Activated CD4-positive, alpha-beta memory T cell treated with anti-CD3 and anti-CD28 coated beads for 36 hours (primary cell): ENCODE measurements at regions of chr1 and their contacts with region 1.

Region 1: DNA sequence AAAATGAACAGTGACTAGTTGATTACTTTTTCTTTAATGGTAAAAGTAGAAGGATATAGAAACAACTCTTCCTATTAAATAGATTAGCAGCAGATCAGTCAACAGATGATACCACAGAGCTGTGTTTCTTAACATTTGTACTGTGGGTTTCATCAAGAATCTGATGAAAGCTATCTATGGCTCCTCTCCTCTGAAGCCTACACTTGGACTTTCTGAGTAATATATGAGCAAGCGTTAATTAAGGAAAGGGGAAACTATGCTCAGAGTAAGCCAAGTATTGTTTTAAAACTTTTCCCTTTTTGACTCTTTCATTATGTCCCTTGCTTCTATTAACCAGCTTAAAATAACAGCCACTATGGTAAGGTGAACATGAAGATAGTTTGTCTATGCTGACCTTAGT is 10.8 kb downstream of the ARID4B start:
- DNase-seq: no peak
- H3K4me3 Mint-ChIP-seq: no peak overlapping the region
- H3K27ac Mint-ChIP-seq: peak overlapping the region; percentile 68
- H3K4me1 Mint-ChIP-seq: peaks cover 74% of the 10 kb centered on the region
- H3K27me3 Mint-ChIP-seq: no peaks in the 10 kb centered on the region

Region 2: DNA sequence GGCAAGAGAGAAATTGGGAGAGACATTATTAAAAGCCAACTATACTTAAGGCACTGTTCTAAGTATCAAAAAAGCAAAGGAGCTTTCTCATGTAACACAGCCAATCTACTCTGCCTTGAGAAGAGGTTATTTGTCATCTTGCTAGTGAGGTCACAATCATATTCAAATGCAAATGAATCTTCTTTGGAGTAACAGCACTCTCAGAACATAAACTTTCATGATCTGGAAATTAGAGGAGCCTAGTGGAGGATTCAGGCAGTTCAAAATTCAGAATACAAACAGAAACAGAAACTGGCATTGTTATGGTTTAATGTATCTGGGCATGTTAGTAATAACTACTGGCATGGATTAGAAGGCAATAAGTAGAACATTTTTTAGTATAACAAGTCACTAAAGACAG is 46.5 kb before region 1 on chr1:
- CTCF ChIA-PET with region 1: interaction called, 3 read pairs
- POLR2A ChIA-PET with region 1: no interaction called
- intact Hi-C with region 1: loop called (anchors 5 kb)
- DNase-seq: no peak
- H3K4me3 Mint-ChIP-seq: no peak overlapping the region
- H3K27ac Mint-ChIP-seq: peak overlapping the region; percentile 70
- H3K4me1 Mint-ChIP-seq: peaks cover 68% of the 10 kb centered on the region
- H3K27me3 Mint-ChIP-seq: no peaks in the 10 kb centered on the region

Region 3: GRCh38 chr1:235297579-235297978 is 19.6 kb before region 1 on chr1:
- CTCF ChIA-PET with region 1: interaction called, 3 read pairs
- POLR2A ChIA-PET with region 1: interaction called, 4 read pairs
- intact Hi-C with region 1: loop called (anchors 2 kb)
- DNase-seq: no peak
- H3K4me3 Mint-ChIP-seq: peak overlapping the region; percentile 66
- H3K27ac Mint-ChIP-seq: peak overlapping the region; percentile 79
- H3K4me1 Mint-ChIP-seq: peaks cover 53% of the 10 kb centered on the region
- H3K27me3 Mint-ChIP-seq: no peaks in the 10 kb centered on the region

Region 4: GRCh38 chr1:235304549-235305451 is 12.4 kb before region 1 on chr1:
- CTCF ChIA-PET with region 1: no interaction called
- POLR2A ChIA-PET with region 1: interaction called, 5 read pairs
- intact Hi-C with region 1: loop called (anchors 1 kb)
- DNase-seq: peak; percentile 36
- H3K4me3 Mint-ChIP-seq: peak overlapping the region; percentile 49
- H3K27ac Mint-ChIP-seq: peak overlapping the region; percentile 87
- H3K4me1 Mint-ChIP-seq: peaks cover 51% of the 10 kb centered on the region
- H3K27me3 Mint-ChIP-seq: no peaks in the 10 kb centered on the region

Region 5: DNA sequence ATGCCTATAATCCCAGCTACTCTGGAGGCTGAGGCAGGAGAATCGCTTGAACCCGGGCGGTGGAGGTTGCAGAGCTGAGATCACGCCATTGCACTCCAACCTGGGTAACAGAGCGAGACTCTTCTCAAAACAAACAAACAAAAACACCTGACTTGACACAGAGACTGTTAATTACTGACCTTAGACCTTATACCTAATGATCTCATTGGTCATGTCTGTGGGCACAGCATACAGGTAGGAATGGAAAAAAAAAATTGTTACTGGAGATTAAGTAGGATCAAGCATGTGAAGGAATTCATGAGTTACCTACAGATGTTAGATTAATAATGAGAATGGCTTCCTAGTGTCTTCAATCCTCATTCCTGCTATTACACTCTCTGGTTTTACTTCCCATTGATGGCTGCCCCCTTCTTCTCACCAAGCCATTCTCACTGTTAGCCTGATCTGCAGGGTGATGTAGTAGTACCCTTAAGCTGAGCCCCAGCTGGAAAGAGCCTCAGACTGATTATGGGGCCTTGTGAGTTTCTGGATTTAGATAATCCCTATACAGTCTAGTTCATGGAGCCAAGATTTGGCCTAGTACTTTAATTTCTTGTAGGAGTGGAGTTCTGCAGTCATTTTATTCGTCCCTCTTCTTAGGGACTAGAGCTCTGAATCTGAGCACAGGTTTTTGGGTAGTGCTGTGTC is 58.9 kb after region 1 on chr1:
- CTCF ChIA-PET with region 1: no interaction called
- POLR2A ChIA-PET with region 1: no interaction called
- intact Hi-C with region 1: no loop called
- DNase-seq: no peak
- H3K4me3 Mint-ChIP-seq: no peak overlapping the region
- H3K27ac Mint-ChIP-seq: no peak overlapping the region
- H3K4me1 Mint-ChIP-seq: peaks cover 6% of the 10 kb centered on the region
- H3K27me3 Mint-ChIP-seq: no peaks in the 10 kb centered on the region